MCF 10A (cell line): ENCODE measurements at regions of chr22 and their contacts with region 1.

Region 1: DNA sequence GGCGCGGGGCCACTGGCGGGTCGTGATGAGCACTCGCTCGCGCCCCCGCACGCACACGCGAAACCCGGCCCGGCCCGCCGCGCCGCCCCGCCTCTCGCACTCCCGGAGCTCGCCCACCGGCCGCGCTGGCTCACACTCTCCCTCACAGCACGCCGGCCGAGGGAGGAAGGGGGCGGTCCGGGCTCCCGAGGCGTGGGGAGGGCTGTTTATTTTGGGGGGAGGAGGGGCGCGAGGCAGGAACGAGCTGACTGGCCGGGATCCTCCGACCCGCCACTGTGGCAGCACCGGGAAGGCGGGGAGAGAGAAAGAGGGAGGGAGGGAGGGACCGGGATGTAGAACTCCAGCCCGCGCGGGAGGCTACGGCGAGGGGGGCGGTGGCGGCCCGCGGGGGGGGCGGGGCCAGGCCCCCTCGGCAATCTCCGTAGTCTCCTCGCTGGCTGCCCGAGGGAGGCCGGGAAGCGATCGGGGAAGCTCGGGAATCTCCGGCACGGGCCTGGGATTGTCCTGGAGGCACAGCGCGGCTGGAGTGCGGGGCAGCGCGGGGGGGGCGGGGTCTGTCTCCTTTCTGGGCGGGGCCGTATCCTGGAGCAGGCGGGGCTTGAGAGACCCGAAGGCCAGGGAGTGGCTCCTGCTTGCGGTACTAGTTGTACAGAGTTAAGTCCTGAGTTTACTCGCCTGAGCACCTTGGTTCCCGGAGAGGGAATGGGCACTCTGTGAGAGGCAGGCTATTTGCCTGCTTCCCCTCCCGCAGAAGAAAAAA is at the start of gene RBFOX2:
- DNase-seq: peak; percentile 96
- H3K4me3 Mint-ChIP-seq: peak within 1 kb of the TSS; percentile 83
- H3K27ac Mint-ChIP-seq: peak within 1 kb of the TSS; percentile 84
- H3K4me1 Mint-ChIP-seq: peaks cover 29% of the 10 kb centered on the region
- H3K27me3 Mint-ChIP-seq: no peaks in the 10 kb centered on the region
- CTCF ChIP-seq: no peak
- total RNA-seq, gene RBFOX2: 89.4 and 92.0 TPM in 2 replicates

Region 2: GRCh38 chr22:35930933-35931332 is 97.9 kb before region 1 on chr22:
- CTCF ChIA-PET with region 1: interaction called, 3 read pairs
- POLR2A ChIA-PET with region 1: interaction called, 6 read pairs
- intact Hi-C with region 1: loop called (anchors 2 kb)
- DNase-seq: peak; percentile 63
- H3K4me3 Mint-ChIP-seq: no peak overlapping the region
- H3K27ac Mint-ChIP-seq: peak overlapping the region; percentile 21
- H3K4me1 Mint-ChIP-seq: no peaks in the 10 kb centered on the region
- H3K27me3 Mint-ChIP-seq: no peaks in the 10 kb centered on the region
- CTCF ChIP-seq: peak; percentile 54

Region 3: DNA sequence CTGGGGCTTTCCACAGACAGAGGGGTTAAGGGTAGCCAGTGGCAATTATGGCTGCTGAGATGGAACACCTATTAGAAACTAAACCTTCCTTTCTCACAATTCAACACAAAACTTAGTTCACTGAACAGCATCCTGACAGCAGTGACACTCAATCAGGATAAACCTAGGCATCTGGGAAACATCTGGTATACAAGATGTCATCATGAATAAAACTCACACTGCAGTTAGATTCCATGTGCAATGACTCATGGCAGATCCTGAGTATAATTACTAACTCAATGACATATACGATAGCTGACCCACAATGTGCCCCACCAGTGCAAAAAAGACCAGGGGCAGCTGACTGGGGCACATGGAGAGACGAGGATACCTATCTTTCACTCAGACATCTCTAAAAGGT is 17.9 kb before region 1 on chr22:
- CTCF ChIA-PET with region 1: interaction called, 5 read pairs
- POLR2A ChIA-PET with region 1: interaction called, 20 read pairs
- intact Hi-C with region 1: no loop called
- DNase-seq: peak; percentile 34
- H3K4me3 Mint-ChIP-seq: no peak overlapping the region
- H3K27ac Mint-ChIP-seq: no peak overlapping the region
- H3K4me1 Mint-ChIP-seq: peaks cover 16% of the 10 kb centered on the region
- H3K27me3 Mint-ChIP-seq: no peaks in the 10 kb centered on the region
- CTCF ChIP-seq: no peak